Left cardiac atrium (tissue), 4 donors: ENCODE measurements at regions of chr9 and their contacts with region 1.

Region 1: GRCh38 chr9:5437254-5438216 is at the start of gene PLGRKT:
- DNase-seq: peak; percentile 97
- ATAC-seq: peak; percentile 98 to 99
- total RNA-seq, gene PLGRKT: 31.9 to 37.1 TPM

Region 2: GRCh38 chr9:5186416-5187169 is 250.9 kb before region 1 on chr9:
- intact Hi-C with region 1: loop called in 1 of 2 experiments (anchors 5 kb)
- DNase-seq: peak; percentile 46
- ATAC-seq: peak; percentile 67

Region 3: DNA sequence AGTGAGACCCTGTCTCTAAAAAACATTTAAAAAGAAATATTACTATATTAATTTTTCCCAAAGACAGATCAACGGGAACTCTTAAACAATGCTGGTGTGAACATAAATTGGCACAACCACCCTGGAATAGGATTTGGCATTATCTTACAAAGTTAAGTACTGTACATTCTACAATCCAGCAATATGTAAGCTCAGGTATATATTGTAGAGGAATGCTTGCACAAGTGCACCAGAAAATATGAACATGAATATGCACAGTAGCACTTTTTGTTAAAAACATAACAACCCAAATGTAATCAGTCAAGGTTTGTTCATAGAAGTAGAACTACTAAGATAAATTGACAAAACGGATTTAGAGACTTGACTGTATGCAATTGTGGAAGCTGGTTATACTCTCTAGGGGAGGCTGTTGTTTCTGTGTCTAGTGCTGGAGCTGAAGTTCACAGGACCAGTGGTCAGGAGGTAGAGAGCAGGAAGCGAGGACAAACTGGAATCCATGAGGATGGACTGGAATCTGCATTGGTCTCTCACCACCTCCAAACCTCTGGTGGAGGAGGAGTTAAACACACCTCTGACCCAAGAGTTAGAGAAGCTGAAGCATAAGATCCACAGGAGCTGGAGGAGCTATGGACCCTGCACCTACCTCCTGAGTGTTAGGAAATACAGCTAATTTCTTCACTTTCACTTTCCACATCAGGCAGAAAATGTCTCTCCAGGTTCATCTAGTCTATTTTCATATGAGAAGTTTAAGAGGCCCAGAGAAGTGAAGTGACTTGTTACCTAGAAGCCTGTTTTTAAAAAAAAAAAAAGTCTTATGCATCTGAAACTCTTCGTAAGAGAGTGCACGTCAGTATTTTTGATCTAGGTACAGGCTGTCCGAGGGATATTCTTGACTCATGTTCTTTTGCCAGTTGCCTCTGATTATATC is 171.0 kb after region 1 on chr9:
- intact Hi-C with region 1: no loop called
- DNase-seq: no peak
- ATAC-seq: peak; percentile 64 to 90